Endothelial cell of umbilical vein (primary cell): ENCODE measurements at regions of chr7 and their contacts with region 1.

Region 1: DNA sequence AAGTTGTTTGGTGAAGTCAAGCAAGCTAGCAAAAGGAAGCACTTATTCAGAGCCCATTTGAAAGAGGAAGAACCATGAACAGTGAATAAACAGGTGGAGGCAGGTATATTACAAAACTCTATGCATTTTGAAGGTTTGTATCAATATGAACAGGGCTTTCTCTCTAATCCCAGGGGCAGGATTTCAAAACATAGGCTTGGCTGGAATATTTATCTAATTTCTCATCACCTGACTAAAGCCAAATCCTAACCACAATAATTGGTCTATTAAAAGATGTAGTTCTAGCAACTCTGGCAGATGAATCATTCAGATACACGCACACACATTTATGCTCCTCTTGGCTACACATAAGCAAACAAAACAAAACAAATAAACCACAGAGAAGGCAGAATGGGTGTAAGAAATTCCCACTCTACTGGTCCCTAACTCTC is 554.4 kb downstream of the INHBA start:
- DNase-seq: peak; percentile 35
- H3K4me3 ChIP-seq: no peak overlapping the region
- H3K27ac ChIP-seq: no peak overlapping the region
- H3K4me1 ChIP-seq: peaks cover 3% of the 10 kb centered on the region
- H3K27me3 ChIP-seq: no peaks in the 10 kb centered on the region
- CTCF ChIP-seq: no peak
- POLR2A ChIP-seq: no peak

Region 2: GRCh38 chr7:41134300-41135250 is 14.0 kb before region 1 on chr7:
- CTCF ChIA-PET with region 1: no interaction called
- POLR2A ChIA-PET with region 1: no interaction called
- dilution Hi-C with region 1: no loop called
- intact Hi-C with region 1: loop called (anchors 2 kb)
- DNase-seq: no peak
- H3K4me3 ChIP-seq: no peak overlapping the region
- H3K27ac ChIP-seq: no peak overlapping the region
- H3K4me1 ChIP-seq: no peaks in the 10 kb centered on the region
- H3K27me3 ChIP-seq: no peaks in the 10 kb centered on the region
- CTCF ChIP-seq: no peak
- POLR2A ChIP-seq: no peak